ENCODE measurements at regions of chr4 and their contacts with region 1.

Region 1: DNA sequence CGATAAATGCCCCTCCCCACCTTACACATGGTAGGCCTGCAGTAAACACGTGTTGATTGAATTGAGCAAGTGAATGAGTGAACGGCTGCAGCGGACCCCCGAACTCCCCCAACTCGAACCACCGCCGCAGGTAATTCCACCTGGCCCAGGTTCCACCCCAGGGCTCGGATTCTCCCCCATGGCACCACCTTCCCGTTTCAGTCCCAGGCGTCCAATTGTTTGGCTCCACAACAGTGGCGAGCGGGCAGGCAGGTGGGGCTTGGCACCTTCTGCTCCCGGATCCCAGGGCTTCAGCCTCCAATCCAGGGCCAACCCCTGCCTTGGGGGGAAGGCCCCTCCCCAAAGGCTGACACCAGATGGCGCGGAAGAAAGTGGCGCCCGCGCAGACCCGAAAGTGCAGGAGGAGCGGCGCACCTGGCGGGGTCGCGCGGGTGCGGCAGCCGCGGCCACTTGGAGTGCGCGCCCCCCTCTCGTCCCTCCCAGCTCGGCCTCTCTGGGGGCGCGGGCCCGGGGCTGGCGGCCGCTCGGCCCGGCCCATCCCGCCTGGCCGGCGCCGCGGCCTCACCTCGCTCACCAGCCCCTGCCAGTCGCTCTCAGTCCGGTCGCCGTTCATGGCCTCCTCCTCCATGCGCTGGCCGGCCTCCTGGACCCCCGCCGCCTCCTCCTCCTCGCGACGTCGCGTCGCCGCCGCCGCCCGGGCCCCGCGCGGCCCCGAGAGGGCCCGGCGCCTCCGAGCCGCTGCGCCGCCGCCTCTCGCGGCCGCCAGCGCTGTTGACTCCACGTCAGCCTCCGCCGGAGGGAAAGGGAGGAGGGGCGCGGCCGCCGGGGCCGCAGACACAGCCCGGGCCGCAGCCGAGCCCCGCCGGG is at the start of gene CCDC149:
- DNase-seq: peak; percentile 41 to 93 (median 50)

Region 2: DNA sequence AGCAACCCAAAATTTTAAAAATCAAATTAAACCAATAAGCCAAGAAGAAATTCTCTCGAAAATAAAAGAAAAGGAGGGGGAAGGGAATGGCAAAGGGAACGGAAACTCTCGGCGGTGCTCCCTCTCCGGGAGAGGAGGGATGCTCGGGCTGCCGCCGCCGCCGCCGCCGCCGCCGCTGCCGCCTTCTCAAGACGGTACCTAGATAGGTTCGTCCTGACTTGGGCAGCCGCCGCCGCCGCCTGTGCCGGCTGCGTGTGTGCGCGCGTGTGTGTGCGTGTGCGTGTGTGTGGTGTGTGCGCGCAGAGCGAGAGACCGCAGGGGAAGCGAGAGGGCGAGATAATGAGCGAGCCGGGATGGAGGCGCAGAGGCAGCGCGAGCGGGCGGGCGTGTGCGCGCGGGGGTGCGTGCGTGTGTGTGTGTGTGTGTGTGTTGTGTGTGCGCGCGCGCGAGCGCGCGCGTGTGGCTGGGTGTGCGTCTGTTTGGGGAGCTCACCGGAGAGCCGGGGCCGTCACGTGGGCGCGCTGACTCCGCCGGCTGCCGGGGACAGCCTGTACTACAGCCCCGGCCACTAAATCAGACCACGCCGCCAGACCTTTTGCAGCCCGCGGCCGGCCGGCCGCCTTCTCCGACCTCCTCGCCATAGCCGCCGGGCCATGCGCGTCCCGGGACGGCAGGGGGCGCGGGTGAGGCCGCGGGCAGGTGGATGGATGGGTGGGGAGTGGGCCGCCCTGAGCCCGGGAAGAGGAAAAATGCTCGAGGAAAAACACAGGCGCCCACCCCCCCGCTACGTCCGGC is 439.8 kb before region 1 on chr4:
- intact Hi-C with region 1: loop called (anchors 10 kb)
- DNase-seq: peak; percentile 58 to 97 (median 80)

Region 3: GRCh38 chr4:24809376-24809775 is 103.1 kb before region 1 on chr4:
- intact Hi-C with region 1: loop called (anchors 10 kb)
- DNase-seq: no peak

Measured in posterior cingulate gyrus (tissue), 11 donors.